Stomach (tissue), 19 donors: ENCODE measurements at regions of chr6 and their contacts with region 1.

Region 1: GRCh38 chr6:122749451-122750050 is 30.0 kb upstream of the FABP7 start:
- DNase-seq: no peak
- H3K4me3 ChIP-seq: no peak overlapping the region
- H3K27ac ChIP-seq: no peak overlapping the region
- H3K4me1 ChIP-seq: no peaks in the 10 kb centered on the region
- H3K27me3 ChIP-seq: no peaks in the 10 kb centered on the region
- CTCF ChIP-seq: no peak
- EP300 ChIP-seq: no peak
- POLR2A ChIP-seq: no peak

Region 2: GRCh38 chr6:122839477-122839876 is 89.9 kb after region 1 on chr6:
- intact Hi-C with region 1: loop called (anchors 5 kb)
- DNase-seq: peak; percentile 67 to 78
- H3K4me3 ChIP-seq: no peak overlapping the region
- H3K27ac ChIP-seq: no peak overlapping the region
- H3K4me1 ChIP-seq: no peaks in the 10 kb centered on the region
- H3K27me3 ChIP-seq: no peaks in the 10 kb centered on the region
- CTCF ChIP-seq: peak in 5 of 7 experiments; percentile 47 to 89 (median 69)
- EP300 ChIP-seq: no peak
- POLR2A ChIP-seq: no peak

Region 3: DNA sequence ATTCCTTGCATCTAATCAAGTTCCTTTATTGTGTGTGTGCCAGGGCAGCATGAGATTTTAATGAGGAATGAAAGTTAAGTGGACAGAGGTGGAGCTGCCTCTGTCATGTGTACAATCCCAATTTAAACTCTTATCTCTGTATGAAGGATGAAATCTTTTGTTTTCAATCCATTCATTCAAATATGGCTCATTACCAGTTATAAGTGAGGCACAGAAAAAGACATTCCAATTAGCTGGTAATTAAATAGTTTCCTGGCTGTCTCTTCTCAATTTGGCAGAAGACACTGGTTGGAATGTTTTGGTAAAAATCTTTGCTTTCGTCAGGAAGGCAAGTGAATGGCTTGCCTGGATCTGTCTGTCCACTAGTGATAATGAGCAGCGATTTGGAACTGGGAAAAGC is 292.9 kb after region 1 on chr6:
- intact Hi-C with region 1: no loop called
- DNase-seq: no peak
- H3K4me3 ChIP-seq: no peak overlapping the region
- H3K27ac ChIP-seq: no peak overlapping the region
- H3K4me1 ChIP-seq: no peaks in the 10 kb centered on the region
- H3K27me3 ChIP-seq: no peaks in the 10 kb centered on the region
- CTCF ChIP-seq: no peak
- EP300 ChIP-seq: no peak
- POLR2A ChIP-seq: no peak